Common myeloid progenitor, CD34-positive (primary cell): ENCODE measurements at regions of chr4 and their contacts with region 1.

Region 1: GRCh38 chr4:6250235-6250983 is 19.2 kb upstream of the WFS1 start:
- DNase-seq: peak; percentile 66 to 85 (median 72)
- H3K4me3 ChIP-seq: no peak overlapping the region
- H3K27ac ChIP-seq: no peak overlapping the region
- H3K4me1 ChIP-seq: no peaks in the 10 kb centered on the region
- H3K27me3 ChIP-seq: peaks cover 0 to 66% (median 16%) of the 10 kb centered on the region in 5 experiments

Region 2: DNA sequence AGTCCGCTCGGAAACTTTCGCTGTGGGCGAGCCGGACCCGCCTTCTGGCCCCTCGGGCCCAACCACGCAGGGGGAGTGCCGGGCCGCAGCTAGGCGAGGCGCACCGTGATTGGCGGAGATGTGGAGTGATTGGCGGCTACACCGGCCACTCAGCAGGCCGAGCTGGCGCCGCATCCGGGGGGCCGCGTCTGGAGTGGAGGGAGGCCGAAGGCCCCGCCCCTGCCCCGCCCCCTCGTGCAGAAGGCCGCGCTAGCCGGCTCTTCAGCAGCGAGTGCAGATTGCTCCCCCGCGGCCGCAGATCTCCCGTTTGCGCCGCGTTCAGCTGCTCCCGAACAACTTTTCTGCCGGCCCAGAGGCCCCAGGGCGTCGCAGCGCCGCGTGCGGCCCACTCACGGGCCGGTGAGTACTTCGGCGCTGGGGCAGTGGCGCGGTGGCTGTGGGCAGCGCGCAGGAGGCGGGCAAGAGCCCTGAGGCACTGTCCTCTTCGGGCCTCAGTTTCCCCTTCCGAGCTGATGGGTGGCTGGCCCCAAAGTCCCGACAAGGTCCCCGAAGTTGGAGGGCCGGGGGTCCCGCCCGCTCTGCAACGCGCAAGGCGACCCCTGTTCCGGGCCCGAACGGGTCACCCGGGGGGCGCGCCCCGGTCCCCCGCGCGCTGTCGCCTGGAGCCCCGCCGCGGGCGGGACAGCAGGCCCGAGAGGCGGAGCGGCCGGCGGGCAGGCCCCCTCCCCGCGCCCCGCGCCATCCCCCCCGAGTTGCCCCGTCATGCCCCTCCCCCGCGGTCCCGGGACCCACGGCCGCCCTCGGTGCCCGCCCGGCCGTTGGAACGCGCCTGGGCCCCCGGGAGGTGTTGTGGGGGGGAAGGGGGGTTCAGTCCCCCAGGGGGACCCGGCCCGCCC is 19.5 kb after region 1 on chr4 and contains the start of gene WFS1:
- CTCF ChIA-PET with region 1: interaction called, 135 read pairs
- POLR2A ChIA-PET with region 1: no interaction called
- DNase-seq: peak; percentile 94 to 98 (median 96)
- H3K4me3 ChIP-seq: peak within 1 kb of the TSS; percentile 23 to 79 (median 64)
- H3K27ac ChIP-seq: no peak within 1 kb of the TSS
- H3K4me1 ChIP-seq: peaks cover 0 to 35% (median 14%) of the 10 kb centered on the region in 4 experiments
- H3K27me3 ChIP-seq: peaks cover 0 to 73% (median 31%) of the 10 kb centered on the region in 5 experiments

Region 3: GRCh38 chr4:6308899-6309643 is 58.7 kb after region 1 on chr4:
- CTCF ChIA-PET with region 1: interaction called, 11 read pairs
- POLR2A ChIA-PET with region 1: no interaction called
- DNase-seq: peak; percentile 26 to 46 (median 39)
- H3K4me3 ChIP-seq: peak overlapping the region in 5 of 7 experiments; percentile 11 to 51 (median 50)
- H3K27ac ChIP-seq: no peak overlapping the region
- H3K4me1 ChIP-seq: peaks cover 0 to 16% (median 6%) of the 10 kb centered on the region in 4 experiments
- H3K27me3 ChIP-seq: peaks cover 0 to 88% (median 28%) of the 10 kb centered on the region in 5 experiments

Region 4: DNA sequence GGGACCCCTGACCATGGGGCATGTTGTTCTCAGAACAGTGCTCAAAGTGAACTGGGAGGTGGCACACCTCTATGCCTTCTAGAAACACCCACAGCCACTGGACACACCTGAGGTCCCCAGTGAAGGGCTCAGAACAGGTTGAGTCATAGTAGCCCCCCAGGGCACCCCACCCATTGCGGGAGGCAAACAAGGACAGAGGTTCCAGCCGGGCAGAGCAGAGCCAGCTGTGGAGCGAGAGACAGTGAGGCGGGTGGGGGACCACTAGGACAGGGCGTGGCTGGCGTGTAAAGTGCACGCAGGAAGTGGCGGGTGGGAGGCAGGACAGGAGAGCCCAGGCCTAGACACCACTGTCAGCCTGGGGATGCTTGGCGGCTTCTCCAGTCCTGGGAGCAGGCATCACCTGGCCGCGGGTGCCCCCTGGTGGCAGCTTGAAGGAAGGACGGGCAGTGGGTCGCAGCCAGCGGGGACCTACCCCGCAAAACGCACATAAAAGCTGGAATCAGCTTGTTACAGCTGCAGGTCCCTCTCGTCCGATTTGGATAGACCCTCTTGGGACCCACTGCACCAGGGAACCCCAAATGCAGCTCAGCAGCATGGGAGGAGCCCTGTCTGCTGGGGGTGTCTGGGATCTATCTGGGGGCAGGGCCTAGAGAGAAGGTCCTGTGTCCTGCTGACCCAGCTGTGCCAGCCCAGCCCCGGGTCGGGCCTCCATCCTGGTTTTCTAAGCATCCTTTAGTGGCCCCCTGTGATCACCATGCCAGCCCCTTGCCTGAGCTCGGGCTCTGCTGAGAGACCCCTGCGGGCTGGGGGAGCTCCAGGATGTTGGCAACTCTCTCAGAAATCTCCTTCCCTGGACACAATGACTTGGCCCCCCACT is 76.9 kb after region 1 on chr4:
- CTCF ChIA-PET with region 1: interaction called, 347 read pairs
- POLR2A ChIA-PET with region 1: interaction called, 6 read pairs
- DNase-seq: peak; percentile 59 to 81 (median 77)
- H3K4me3 ChIP-seq: no peak overlapping the region
- H3K27ac ChIP-seq: no peak overlapping the region
- H3K4me1 ChIP-seq: peaks cover 0 to 23% (median 20%) of the 10 kb centered on the region in 4 experiments
- H3K27me3 ChIP-seq: peaks cover 0 to 70% (median 9%) of the 10 kb centered on the region in 5 experiments

Region 5: GRCh38 chr4:6761649-6762602 is 511.5 kb after region 1 on chr4:
- CTCF ChIA-PET with region 1: no interaction called
- POLR2A ChIA-PET with region 1: no interaction called
- DNase-seq: peak in 2 of 3 donors; percentile 33 to 50
- H3K4me3 ChIP-seq: no peak overlapping the region
- H3K27ac ChIP-seq: no peak overlapping the region
- H3K4me1 ChIP-seq: peaks cover 0 to 12% (median 3%) of the 10 kb centered on the region in 4 experiments
- H3K27me3 ChIP-seq: peaks cover 0 to 2% (median 0%) of the 10 kb centered on the region in 5 experiments